Right cardiac atrium (tissue), 5 donors: ENCODE measurements at regions of chr2 and their contacts with region 1.

Region 1: GRCh38 chr2:174465327-174465726 is 21.5 kb downstream of the GPR155 start:
- DNase-seq: peak in 1 of 3 donors; percentile 14
- ATAC-seq: no peak
- H3K4me3 ChIP-seq: no peak overlapping the region
- H3K27ac ChIP-seq: no peak overlapping the region
- H3K4me1 ChIP-seq: no peaks in the 10 kb centered on the region
- H3K27me3 ChIP-seq: no peaks in the 10 kb centered on the region

Region 2: DNA sequence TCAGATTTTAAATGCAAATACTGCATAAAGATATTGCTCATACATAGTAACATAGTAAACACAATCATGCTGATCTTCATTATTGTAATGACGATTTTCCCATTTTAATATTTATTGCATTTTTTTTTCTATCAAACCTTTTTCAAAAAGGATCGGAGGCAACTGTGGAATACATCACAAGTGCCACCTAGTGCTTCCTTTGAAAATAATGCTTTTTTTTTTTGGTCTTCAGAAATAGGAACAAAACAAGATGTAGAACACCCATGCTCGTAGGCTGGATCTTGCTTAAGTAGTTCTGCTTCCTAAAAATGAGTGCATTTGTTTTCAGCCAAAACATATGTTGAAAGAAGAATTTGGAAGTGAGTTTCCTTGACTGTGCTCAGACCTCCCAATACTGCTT is 57.2 kb after region 1 on chr2:
- intact Hi-C with region 1: loop called in 3 of 4 experiments (anchors 5 to 10 kb)
- DNase-seq: no peak
- ATAC-seq: no peak
- H3K4me3 ChIP-seq: no peak overlapping the region
- H3K27ac ChIP-seq: no peak overlapping the region
- H3K4me1 ChIP-seq: no peaks in the 10 kb centered on the region
- H3K27me3 ChIP-seq: no peaks in the 10 kb centered on the region

Region 3: DNA sequence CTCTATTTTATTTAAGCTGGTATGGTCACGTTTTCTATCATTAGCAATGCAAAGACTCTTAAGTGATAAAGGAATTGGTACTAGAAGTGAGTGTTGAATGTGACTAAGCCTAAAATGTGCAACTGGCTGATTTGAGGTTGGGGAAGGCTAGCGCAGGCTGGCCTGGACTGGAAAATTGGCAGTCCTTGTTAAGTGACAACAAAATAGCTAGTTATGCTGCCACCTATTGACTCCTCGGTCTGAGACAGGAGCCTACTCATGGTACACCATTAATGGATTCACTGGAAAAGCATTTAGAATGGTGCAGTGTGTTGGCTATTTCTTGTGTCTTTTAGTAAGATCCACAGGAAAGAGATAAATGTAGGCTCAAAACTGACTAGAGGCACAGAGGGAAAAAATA is 138.0 kb after region 1 on chr2:
- intact Hi-C with region 1: loop called in 3 of 4 experiments (anchors 5 to 10 kb)
- DNase-seq: peak; percentile 47 to 80 (median 60)
- ATAC-seq: peak; percentile 89 to 90
- H3K4me3 ChIP-seq: no peak overlapping the region
- H3K27ac ChIP-seq: no peak overlapping the region
- H3K4me1 ChIP-seq: peaks cover 2% of the 10 kb centered on the region
- H3K27me3 ChIP-seq: no peaks in the 10 kb centered on the region

Region 4: GRCh38 chr2:174688079-174688478 is 222.8 kb after region 1 on chr2:
- intact Hi-C with region 1: loop called (anchors 5 to 10 kb)
- DNase-seq: no peak
- ATAC-seq: no peak
- H3K4me3 ChIP-seq: no peak overlapping the region
- H3K27ac ChIP-seq: no peak overlapping the region
- H3K4me1 ChIP-seq: no peaks in the 10 kb centered on the region
- H3K27me3 ChIP-seq: no peaks in the 10 kb centered on the region

Region 5: DNA sequence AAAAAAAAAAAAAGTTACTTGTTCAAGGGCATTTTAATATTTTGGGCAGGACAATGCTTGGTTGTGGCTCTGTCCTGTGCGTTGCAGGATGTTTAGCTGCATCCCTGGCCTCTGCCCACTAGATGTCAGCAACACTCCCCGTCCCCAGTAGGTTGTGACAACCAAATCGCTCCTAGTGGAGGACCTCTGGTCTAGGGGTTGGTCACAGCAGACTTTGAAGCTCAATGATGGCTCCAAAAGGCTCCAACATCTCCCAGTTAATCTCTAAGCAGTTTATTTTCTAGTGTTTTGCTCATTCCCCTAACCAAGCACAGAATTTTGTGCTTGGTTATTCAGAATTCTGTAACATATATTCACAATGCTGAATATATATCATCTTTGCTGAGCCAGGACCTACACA is 231.9 kb after region 1 on chr2:
- intact Hi-C with region 1: loop called in 3 of 4 experiments (anchors 5 to 10 kb)
- DNase-seq: peak; percentile 47 to 61 (median 60)
- ATAC-seq: peak; percentile 86 to 90
- H3K4me3 ChIP-seq: no peak overlapping the region
- H3K27ac ChIP-seq: no peak overlapping the region
- H3K4me1 ChIP-seq: no peaks in the 10 kb centered on the region
- H3K27me3 ChIP-seq: no peaks in the 10 kb centered on the region